MCF 10A (cell line): ENCODE measurements at regions of chr7 and their contacts with region 1.

Region 1: DNA sequence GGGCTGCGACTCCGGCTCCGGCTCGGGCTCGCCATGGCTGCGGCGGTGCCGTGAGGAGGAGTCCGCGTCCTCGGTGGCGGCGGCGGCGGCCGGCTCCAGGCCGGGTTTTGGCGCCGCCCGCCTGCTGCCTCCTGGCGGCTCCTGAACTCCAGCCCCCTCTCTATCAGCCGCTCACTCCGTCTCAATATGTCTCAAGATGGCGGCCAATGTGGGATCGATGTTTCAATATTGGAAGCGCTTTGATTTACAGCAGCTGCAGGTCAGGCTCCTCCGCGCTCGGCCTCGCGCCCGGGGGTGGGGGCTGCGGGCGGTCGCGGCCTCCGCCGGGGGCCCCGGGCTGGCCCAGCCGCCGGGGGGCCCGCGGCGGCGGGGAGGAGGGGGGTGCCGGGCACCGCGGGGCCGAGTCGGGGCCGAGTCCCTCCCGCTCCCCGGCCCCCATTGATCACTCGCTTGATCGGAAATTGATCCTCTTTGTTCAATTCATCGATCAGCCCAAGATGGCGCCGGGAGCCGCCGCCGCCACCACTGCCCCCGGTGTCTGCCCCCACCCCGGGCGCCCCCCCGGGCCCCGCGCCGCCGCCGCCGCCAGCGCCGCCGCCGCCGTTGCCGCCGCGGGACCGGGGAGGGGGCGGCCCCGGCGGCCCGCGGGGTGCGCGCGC is 1.5 kb upstream of the CUX1 start:
- DNase-seq: peak; percentile 79
- H3K4me3 Mint-ChIP-seq: peak overlapping the region; percentile 78
- H3K27ac Mint-ChIP-seq: no peak overlapping the region
- H3K4me1 Mint-ChIP-seq: peaks cover 21% of the 10 kb centered on the region
- H3K27me3 Mint-ChIP-seq: no peaks in the 10 kb centered on the region
- CTCF ChIP-seq: no peak

Region 2: GRCh38 chr7:101542527-101543241 is 273.3 kb before region 1 on chr7:
- CTCF ChIA-PET with region 1: no interaction called
- POLR2A ChIA-PET with region 1: no interaction called
- intact Hi-C with region 1: loop called (anchors 2 kb)
- DNase-seq: peak; percentile 73
- H3K4me3 Mint-ChIP-seq: no peak overlapping the region
- H3K27ac Mint-ChIP-seq: no peak overlapping the region
- H3K4me1 Mint-ChIP-seq: peaks cover 1% of the 10 kb centered on the region
- H3K27me3 Mint-ChIP-seq: no peaks in the 10 kb centered on the region
- CTCF ChIP-seq: peak; percentile 92

Region 3: GRCh38 chr7:101602484-101603241 is 213.3 kb before region 1 on chr7:
- CTCF ChIA-PET with region 1: interaction called, 4 read pairs
- POLR2A ChIA-PET with region 1: interaction called, 3 read pairs
- intact Hi-C with region 1: loop called (anchors 2 kb)
- DNase-seq: peak; percentile 74
- H3K4me3 Mint-ChIP-seq: no peak overlapping the region
- H3K27ac Mint-ChIP-seq: no peak overlapping the region
- H3K4me1 Mint-ChIP-seq: no peaks in the 10 kb centered on the region
- H3K27me3 Mint-ChIP-seq: no peaks in the 10 kb centered on the region
- CTCF ChIP-seq: peak; percentile 92

Region 4: GRCh38 chr7:101688183-101688831 is 127.7 kb before region 1 on chr7:
- CTCF ChIA-PET with region 1: interaction called, 8 read pairs
- POLR2A ChIA-PET with region 1: no interaction called
- intact Hi-C with region 1: loop called (anchors 1 kb)
- DNase-seq: peak; percentile 66
- H3K4me3 Mint-ChIP-seq: no peak overlapping the region
- H3K27ac Mint-ChIP-seq: no peak overlapping the region
- H3K4me1 Mint-ChIP-seq: no peaks in the 10 kb centered on the region
- H3K27me3 Mint-ChIP-seq: no peaks in the 10 kb centered on the region
- CTCF ChIP-seq: peak; percentile 95

Region 5: GRCh38 chr7:101743241-101743994 is 72.5 kb before region 1 on chr7:
- CTCF ChIA-PET with region 1: interaction called, 3 read pairs
- POLR2A ChIA-PET with region 1: interaction called, 3 read pairs
- intact Hi-C with region 1: loop called (anchors 1 kb)
- DNase-seq: peak; percentile 49
- H3K4me3 Mint-ChIP-seq: peak overlapping the region; percentile 73
- H3K27ac Mint-ChIP-seq: no peak overlapping the region
- H3K4me1 Mint-ChIP-seq: peaks cover 10% of the 10 kb centered on the region
- H3K27me3 Mint-ChIP-seq: no peaks in the 10 kb centered on the region
- CTCF ChIP-seq: peak; percentile 44

Region 6: GRCh38 chr7:101832205-101832631 is 16.3 kb after region 1 on chr7:
- CTCF ChIA-PET with region 1: no interaction called
- POLR2A ChIA-PET with region 1: no interaction called
- intact Hi-C with region 1: no loop called
- DNase-seq: no peak
- H3K4me3 Mint-ChIP-seq: no peak overlapping the region
- H3K27ac Mint-ChIP-seq: no peak overlapping the region
- H3K4me1 Mint-ChIP-seq: peaks cover 5% of the 10 kb centered on the region
- H3K27me3 Mint-ChIP-seq: no peaks in the 10 kb centered on the region
- CTCF ChIP-seq: no peak

Region 7: GRCh38 chr7:102834999-102835398 is 1019.0 kb after region 1 on chr7:
- CTCF ChIA-PET with region 1: no interaction called
- POLR2A ChIA-PET with region 1: no interaction called
- intact Hi-C with region 1: no loop called
- DNase-seq: peak; percentile 63
- H3K4me3 Mint-ChIP-seq: peak overlapping the region; percentile 13
- H3K27ac Mint-ChIP-seq: peak overlapping the region; percentile 18
- H3K4me1 Mint-ChIP-seq: peaks cover 17% of the 10 kb centered on the region
- H3K27me3 Mint-ChIP-seq: no peaks in the 10 kb centered on the region
- CTCF ChIP-seq: no peak